ENCODE measurements at regions of chr17 and their contacts with region 1.

Region 1: DNA sequence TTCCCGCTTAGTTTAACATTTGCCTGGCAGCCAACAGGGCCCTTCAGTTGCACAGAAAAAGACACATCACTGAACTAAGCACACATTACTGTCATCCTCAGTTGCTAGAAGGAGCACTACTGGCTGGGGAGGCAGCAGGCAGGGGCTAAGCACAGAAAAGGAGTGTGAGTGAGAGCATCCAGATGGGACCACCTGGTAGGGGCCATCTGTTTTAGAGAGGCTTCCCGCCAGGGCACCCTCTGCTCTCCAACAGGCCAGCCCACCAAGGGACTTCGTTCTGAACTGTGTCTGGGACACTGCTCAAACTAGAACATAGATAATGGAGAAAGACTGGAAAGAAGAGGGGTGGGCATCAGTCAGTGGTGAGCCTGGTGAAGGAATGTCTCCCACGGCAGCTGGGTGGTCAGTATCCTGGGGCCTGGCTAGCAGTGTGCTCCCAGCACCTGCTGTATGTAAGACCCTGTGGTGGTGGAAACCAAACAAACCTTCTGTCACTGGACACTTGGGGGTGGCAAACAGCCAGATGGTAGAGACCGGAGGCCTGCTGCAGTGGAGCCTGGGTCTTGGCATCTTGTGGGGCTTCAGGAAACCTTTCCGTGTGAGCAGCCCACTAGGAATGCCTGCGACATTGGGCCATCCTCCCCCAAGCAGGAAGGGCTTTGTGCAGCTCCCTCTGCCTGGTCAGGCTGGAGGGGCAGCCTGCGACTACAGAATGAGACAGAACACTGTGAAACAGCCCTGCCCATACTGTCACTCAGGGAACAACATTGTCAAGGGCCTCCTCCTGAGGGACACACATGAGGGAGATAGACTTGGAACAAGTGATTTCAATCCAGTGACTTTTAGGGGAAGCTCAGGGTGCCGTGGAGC is 12.8 kb upstream of the RANGRF start:
- DNase-seq: no peak
- ATAC-seq: no peak
- H3K4me3 Mint-ChIP-seq: no peak overlapping the region
- H3K27ac Mint-ChIP-seq: no peak overlapping the region
- H3K4me1 Mint-ChIP-seq: no peaks in the 10 kb centered on the region
- H3K27me3 Mint-ChIP-seq: no peaks in the 10 kb centered on the region
- CTCF ChIP-seq: no peak

Region 2: GRCh38 chr17:7944326-7944725 is 331.3 kb before region 1 on chr17:
- CTCF ChIA-PET with region 1: no interaction called
- POLR2A ChIA-PET with region 1: no interaction called
- intact Hi-C with region 1: no loop called
- DNase-seq: no peak
- ATAC-seq: no peak
- H3K4me3 Mint-ChIP-seq: no peak overlapping the region
- H3K27ac Mint-ChIP-seq: no peak overlapping the region
- H3K4me1 Mint-ChIP-seq: no peaks in the 10 kb centered on the region
- H3K27me3 Mint-ChIP-seq: no peaks in the 10 kb centered on the region
- CTCF ChIP-seq: no peak

Region 3: GRCh38 chr17:8294814-8295316 is 19.2 kb after region 1 on chr17:
- CTCF ChIA-PET with region 1: no interaction called
- POLR2A ChIA-PET with region 1: interaction called, 10 read pairs
- intact Hi-C with region 1: no loop called
- DNase-seq: no peak
- ATAC-seq: no peak
- H3K4me3 Mint-ChIP-seq: peak overlapping the region; percentile 92
- H3K27ac Mint-ChIP-seq: peak overlapping the region; percentile 86
- H3K4me1 Mint-ChIP-seq: peaks cover 30% of the 10 kb centered on the region
- H3K27me3 Mint-ChIP-seq: no peaks in the 10 kb centered on the region
- CTCF ChIP-seq: no peak